Tibial artery (tissue), 4 donors: ENCODE measurements at regions of chr6 and their contacts with region 1.

Region 1: DNA sequence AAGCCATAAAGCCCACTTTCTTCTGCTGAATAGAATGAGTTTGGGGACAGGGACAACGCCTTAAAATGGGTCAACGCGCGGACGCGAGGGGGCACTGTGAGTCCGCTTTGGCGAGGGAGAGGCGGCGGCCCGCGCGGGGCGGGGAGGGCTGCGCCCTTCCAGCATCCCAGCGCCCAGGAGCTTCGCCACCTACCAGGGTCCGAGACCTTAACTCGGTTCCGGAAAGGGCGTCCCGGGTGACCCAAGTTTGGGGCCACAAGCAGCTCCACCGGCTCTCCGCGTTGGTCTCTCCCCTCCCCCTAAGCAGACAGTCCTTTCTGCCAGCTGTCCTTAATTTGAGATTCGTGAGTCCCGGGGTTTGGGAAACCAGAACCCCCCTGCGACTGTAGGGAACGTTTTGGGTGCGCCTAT is 1.8 kb upstream of the SAMD5 start:
- DNase-seq: peak; percentile 51 to 80
- H3K4me3 ChIP-seq: peak overlapping the region; percentile 61 to 82
- H3K27ac ChIP-seq: peak overlapping the region in 1 of 2 donors; percentile 69
- H3K4me1 ChIP-seq: peaks cover 0 to 38% (median 17%) of the 10 kb centered on the region in 4 donors
- H3K27me3 ChIP-seq: peaks cover 0 to 1% of the 10 kb centered on the region in 2 donors
- CTCF ChIP-seq: peak; percentile 82 to 89

Region 2: GRCh38 chr6:147855803-147856482 is 349.2 kb after region 1 on chr6:
- intact Hi-C with region 1: no loop called
- DNase-seq: no peak
- H3K4me3 ChIP-seq: no peak overlapping the region
- H3K27ac ChIP-seq: no peak overlapping the region
- H3K4me1 ChIP-seq: no peaks in the 10 kb centered on the region
- H3K27me3 ChIP-seq: no peaks in the 10 kb centered on the region
- CTCF ChIP-seq: no peak

Region 3: DNA sequence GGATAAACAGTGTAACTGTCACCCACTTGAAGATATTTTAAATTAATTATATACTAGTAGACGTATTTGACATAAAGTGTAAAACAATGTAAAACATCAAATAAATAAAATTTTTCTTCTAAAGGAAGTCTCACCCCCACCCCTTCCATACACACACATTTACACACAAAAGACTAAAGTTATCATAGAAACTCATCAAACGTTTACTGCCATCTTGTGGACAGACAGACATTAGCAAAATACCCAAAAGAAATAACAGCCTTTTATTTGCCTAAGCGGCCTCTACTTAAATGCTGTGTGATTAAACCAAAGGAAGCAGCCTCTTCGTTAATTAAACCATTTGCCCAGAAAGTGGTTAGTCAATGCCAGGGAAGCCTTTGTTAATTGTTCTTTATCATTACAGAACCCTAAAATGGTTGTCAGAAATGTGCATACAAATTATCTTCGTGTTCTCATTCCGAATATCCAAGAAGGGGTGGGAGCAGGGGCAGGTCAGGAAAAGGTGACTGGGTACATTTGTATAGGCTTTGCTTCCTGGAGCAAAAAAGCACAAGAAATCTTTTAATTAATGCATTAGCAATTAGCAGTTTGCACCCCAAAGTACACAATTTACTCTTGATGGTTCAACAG is 659.7 kb after region 1 on chr6:
- intact Hi-C with region 1: loop called (anchors 5 kb)
- DNase-seq: no peak
- H3K4me3 ChIP-seq: no peak overlapping the region
- H3K27ac ChIP-seq: no peak overlapping the region
- H3K4me1 ChIP-seq: no peaks in the 10 kb centered on the region
- H3K27me3 ChIP-seq: no peaks in the 10 kb centered on the region
- CTCF ChIP-seq: peak; percentile 63 to 74